Ascending aorta (tissue), 2 donors: ENCODE measurements at regions of chr6 and their contacts with region 1.

Region 1: DNA sequence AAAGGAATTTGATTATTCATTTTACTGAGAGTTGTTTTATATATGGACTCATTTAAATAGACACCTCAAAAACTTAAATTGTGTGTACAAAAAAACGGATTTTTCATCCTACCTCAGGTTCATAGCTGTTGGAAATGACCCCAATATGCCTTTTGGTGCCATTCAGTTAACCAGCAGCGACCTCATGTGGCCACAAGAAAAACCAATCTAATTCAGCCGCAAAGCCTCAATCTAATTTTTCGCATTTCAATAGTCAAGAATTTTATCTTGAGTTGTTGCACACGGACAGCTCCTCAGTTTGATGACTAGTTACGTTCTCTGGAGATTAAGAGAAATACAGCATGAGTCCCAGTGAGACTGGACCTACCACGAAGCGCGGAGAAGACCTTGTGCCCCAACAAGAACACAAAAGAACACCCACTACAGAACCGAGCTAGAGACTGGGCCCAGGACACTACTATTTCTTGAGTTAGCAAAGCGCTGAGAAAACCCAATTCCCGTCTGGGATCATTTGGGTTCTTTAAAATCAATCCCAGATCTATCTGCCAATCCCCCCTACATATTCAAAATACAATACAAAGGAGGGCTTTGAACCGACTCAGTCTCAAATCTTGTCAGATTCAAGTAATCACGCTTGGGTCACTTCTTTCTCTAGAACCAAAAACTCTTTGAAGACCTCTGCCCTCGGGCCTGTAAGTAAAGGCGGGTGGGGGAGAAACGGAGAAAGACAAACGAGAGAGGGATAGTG is 1.1 kb downstream of the TCP11 start:
- DNase-seq: no peak
- H3K4me3 ChIP-seq: no peak overlapping the region
- H3K27ac ChIP-seq: no peak overlapping the region
- H3K4me1 ChIP-seq: peaks cover 0 to 4% of the 10 kb centered on the region in 2 donors
- H3K27me3 ChIP-seq: no peaks in the 10 kb centered on the region
- CTCF ChIP-seq: peak; percentile 75 to 87 (median 84)

Region 2: DNA sequence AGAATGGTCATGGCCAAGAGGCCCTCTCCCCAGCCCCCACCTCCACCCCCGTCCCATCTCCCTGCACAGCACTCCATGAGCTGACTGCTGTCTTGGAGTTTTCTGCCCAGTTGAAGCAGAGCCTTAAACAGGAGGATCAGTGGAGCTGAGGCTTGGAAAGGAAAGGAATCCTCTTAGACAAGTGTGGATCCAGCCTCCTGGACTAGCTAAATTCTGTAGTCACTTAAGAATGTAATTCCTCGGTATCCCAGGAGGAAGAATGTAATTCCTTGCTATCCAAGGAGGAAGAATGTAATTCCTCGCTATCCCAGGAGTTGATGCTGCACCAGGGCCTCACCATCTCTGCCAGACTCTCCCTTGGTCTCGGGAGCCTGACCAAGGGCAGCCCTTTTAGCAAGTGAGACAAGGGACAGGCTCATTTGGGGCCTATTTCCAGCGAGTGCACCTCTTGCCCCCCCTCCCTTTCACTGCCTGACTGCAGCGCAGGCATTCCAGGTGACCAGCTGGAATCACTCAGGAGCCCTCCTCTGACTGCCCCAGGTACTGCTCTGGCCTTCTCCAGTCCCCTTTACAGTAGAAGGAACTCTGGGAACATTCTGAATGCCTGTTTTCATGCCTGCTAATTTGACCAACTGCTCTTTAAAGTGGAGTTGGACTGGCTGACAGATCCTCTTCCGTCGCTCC is 75.2 kb before region 1 on chr6:
- intact Hi-C with region 1: loop called (anchors 5 kb)
- DNase-seq: no peak
- H3K4me3 ChIP-seq: no peak overlapping the region
- H3K27ac ChIP-seq: peak overlapping the region; percentile 22 to 44
- H3K4me1 ChIP-seq: peaks cover 14 to 21% of the 10 kb centered on the region in 2 donors
- H3K27me3 ChIP-seq: no peaks in the 10 kb centered on the region
- CTCF ChIP-seq: no peak

Region 3: DNA sequence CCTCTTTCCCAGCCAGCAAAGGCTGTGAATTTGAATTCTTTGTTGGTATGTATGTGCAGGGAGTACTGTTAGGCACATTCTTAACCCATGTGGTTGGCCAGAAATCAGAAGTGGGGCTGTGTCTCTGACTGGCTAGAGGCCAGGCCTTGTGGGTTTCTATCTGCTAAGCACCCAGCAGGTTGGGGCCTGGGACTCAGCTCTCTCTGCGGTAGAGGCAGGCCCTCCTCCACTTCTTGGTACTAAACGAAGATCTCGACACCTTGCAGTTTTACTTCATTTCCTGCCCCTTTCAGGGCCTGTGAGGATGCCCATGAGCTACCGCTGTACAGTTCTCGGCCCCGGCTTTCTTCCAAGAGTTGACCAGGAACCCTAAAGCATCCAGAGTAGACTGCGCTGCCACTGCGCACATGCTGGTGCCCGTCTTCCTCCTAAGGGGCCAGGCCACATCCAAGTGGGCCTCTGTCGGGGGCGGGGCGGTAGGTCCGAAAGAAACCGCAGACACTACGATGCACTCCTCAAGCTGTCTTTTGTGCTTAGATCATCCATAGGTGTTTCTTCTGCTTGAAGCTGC is 50.1 kb before region 1 on chr6:
- intact Hi-C with region 1: loop called (anchors 5 kb)
- DNase-seq: peak in 1 of 2 donors; percentile 78
- H3K4me3 ChIP-seq: no peak overlapping the region
- H3K27ac ChIP-seq: peak overlapping the region; percentile 74 to 78
- H3K4me1 ChIP-seq: peaks cover 29 to 63% of the 10 kb centered on the region in 2 donors
- H3K27me3 ChIP-seq: no peaks in the 10 kb centered on the region
- CTCF ChIP-seq: no peak